SK-N-SH (cell line): ENCODE measurements at regions of chr15 and their contacts with region 1.

Region 1: GRCh38 chr15:32657198-32657883 is 15.8 kb downstream of the SCG5 start:
- DNase-seq: no peak
- H3K4me3 ChIP-seq: no peak overlapping the region
- H3K27ac ChIP-seq: peak overlapping the region in 1 of 2 experiments; percentile 76; a peak in 2 of 4 replicates
- H3K4me1 ChIP-seq: peaks cover 7 to 12% of the 10 kb centered on the region in 2 experiments; a peak in 3 of 4 replicates
- H3K27me3 ChIP-seq: no peaks in the 10 kb centered on the region
- CTCF ChIP-seq: peak; percentile 26
- EP300 ChIP-seq: no peak
- RAD21 ChIP-seq: peak; percentile 8; the same call in 1 of the 2 replicates

Region 2: DNA sequence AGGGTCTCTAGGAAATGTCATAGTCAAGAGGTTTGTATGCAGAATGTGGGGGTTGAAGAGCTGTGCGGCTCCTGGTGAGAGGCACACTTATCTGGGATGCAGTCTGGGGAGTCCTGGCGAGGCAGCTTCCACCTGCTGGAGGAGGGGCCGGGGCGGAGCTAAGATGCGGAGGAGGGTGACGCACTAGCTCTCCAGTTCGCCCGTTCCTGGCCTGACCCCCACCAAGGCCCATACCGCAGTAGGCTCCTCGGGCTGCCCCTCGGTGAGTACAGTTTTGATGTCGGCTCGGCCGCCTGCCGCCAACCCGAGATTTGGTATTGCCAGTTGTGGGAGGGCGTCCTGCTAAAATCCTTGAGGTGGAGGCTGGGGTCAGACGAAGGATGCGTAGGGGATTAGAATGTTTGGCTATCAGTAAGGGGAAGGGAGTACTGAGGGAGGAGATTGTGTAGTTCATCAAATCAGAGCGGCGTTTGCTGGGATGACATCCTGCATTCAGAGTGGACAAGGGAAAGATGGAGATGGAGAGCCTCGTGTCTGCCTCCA is 15.8 kb before region 1 on chr15 and contains the start of gene SCG5:
- CTCF ChIA-PET with region 1: interaction called, 21 read pairs
- POLR2A ChIA-PET with region 1: no interaction called
- DNase-seq: peak; percentile 67
- H3K4me3 ChIP-seq: peak within 1 kb of the TSS in 1 of 2 experiments; percentile 41; a peak in 2 of 4 replicates
- H3K27ac ChIP-seq: peak within 1 kb of the TSS in 1 of 2 experiments; percentile 64; a peak in 2 of 4 replicates
- H3K4me1 ChIP-seq: peaks cover 0 to 7% of the 10 kb centered on the region in 2 experiments; a peak in 1 of 4 replicates
- H3K27me3 ChIP-seq: no peaks in the 10 kb centered on the region
- CTCF ChIP-seq: no peak
- EP300 ChIP-seq: no peak
- RAD21 ChIP-seq: no peak
- polyA plus RNA-seq, gene SCG5: 10.1 and 11.0 TPM in 2 replicates

Region 3: DNA sequence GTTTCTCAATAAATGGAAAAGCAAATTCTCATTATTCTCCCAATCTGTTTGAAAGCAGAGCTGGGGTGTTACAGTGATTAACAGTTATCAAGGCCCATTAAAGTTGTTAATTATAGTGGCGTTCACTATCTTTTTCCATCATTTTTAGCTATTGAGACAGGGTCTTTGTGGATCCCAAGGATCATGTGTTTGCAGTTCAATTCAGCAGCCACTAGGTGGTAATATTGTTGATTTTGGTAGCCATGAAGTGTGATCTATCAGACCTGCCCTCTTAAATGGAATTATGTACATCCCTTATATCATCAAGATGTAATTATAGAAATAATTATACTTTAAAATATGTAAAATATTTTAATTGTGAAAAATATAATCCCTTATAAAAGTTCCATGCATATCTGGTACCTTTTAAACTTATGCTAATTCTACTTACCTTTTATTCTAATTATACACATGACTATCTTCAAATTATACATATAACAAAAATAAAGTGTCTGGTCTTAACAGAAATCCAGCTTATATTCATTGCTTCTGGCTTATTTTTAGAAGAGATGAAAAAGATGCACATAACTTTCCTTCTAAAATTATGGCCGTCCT is 186.9 kb after region 1 on chr15:
- CTCF ChIA-PET with region 1: interaction called, 63 read pairs
- POLR2A ChIA-PET with region 1: no interaction called
- DNase-seq: peak; percentile 50
- H3K4me3 ChIP-seq: no peak overlapping the region
- H3K27ac ChIP-seq: peak overlapping the region in 1 of 2 experiments; percentile 21; a peak in 1 of 4 replicates
- H3K4me1 ChIP-seq: no peaks in the 10 kb centered on the region; a peak in 3 of 4 replicates
- H3K27me3 ChIP-seq: no peaks in the 10 kb centered on the region
- CTCF ChIP-seq: peak; percentile 70
- EP300 ChIP-seq: no peak
- RAD21 ChIP-seq: peak; percentile 72

Region 4: GRCh38 chr15:32936283-32936918 is 279.1 kb after region 1 on chr15:
- CTCF ChIA-PET with region 1: interaction called, 15 read pairs
- POLR2A ChIA-PET with region 1: no interaction called
- DNase-seq: no peak
- H3K4me3 ChIP-seq: no peak overlapping the region
- H3K27ac ChIP-seq: no peak overlapping the region
- H3K4me1 ChIP-seq: no peaks in the 10 kb centered on the region
- H3K27me3 ChIP-seq: no peaks in the 10 kb centered on the region
- CTCF ChIP-seq: peak; percentile 43
- EP300 ChIP-seq: no peak
- RAD21 ChIP-seq: peak; percentile 34

Region 5: DNA sequence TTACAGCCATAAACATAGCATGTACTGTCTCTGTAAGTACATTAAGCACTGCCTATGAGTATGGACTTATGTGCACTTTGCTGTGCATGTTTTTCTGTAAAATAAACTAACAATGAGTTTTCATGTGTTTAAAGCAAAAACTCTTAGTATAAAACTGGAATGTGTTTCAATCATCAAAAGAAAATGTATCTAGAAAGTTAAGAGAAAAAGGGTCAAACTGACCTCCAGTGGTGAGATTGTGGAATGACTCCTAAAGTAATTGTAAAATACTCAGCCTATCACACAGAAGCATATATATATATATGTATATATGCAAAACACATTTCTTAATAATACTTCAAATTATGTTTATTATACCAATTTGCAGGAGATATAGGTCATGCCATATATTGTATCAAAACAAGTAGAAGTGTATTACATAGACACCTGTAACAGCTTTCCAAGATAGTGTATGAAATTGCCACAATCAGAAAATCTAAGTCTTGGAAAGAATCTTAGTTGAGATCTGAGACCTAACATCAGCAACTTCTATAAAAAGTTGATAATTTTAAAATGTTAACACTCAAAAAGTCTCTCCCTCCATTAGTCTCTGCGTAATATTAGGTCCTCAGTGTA is 337.6 kb after region 1 on chr15:
- CTCF ChIA-PET with region 1: interaction called, 295 read pairs
- POLR2A ChIA-PET with region 1: no interaction called
- DNase-seq: peak; percentile 38
- H3K4me3 ChIP-seq: no peak overlapping the region
- H3K27ac ChIP-seq: peak overlapping the region in 1 of 2 experiments; percentile 43; a peak in 1 of 4 replicates
- H3K4me1 ChIP-seq: peaks cover 0 to 10% of the 10 kb centered on the region in 2 experiments; a peak in 2 of 4 replicates
- H3K27me3 ChIP-seq: no peaks in the 10 kb centered on the region
- CTCF ChIP-seq: peak; percentile 73
- EP300 ChIP-seq: no peak
- RAD21 ChIP-seq: peak; percentile 87